ENCODE measurements at regions of chr4 and their contacts with region 1.

Region 1: DNA sequence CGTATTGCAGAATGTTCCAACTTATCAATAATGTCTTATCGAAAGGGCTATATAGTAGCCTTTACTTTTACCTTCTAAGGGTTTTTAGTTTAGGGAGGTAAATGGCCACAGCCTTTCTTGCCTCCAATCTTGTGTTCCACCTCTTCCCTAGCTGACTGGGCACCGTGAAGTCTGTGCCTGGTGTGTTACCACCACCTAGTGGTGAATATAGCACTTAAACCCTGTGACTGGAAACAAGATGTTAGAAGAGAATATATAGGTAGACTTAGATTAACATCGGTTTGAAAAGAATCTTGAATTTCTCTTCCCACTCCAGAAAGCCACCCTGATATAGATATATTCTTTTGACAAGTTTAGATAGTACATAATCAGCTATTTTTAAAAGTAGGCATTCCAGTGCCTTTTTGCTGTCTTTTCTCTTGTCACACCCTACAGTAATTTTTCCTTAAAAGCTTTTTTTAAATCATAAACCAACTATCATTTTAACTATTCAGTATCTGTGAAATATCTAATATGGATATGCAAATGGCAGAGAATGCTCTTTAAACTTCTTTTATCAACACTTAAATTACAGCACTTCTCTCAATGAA is 27.8 kb upstream of the ADH7 start:
- DNase-seq: peak; percentile 61
- H3K4me3 ChIP-seq: no peak overlapping the region
- H3K27ac ChIP-seq: no peak overlapping the region
- H3K4me1 ChIP-seq: no peaks in the 10 kb centered on the region
- H3K27me3 ChIP-seq: peaks cover 0 to 13% of the 10 kb centered on the region in 2 experiments
- CTCF ChIP-seq: peak; percentile 56 to 65
- POLR2A ChIP-seq: no peak

Region 2: DNA sequence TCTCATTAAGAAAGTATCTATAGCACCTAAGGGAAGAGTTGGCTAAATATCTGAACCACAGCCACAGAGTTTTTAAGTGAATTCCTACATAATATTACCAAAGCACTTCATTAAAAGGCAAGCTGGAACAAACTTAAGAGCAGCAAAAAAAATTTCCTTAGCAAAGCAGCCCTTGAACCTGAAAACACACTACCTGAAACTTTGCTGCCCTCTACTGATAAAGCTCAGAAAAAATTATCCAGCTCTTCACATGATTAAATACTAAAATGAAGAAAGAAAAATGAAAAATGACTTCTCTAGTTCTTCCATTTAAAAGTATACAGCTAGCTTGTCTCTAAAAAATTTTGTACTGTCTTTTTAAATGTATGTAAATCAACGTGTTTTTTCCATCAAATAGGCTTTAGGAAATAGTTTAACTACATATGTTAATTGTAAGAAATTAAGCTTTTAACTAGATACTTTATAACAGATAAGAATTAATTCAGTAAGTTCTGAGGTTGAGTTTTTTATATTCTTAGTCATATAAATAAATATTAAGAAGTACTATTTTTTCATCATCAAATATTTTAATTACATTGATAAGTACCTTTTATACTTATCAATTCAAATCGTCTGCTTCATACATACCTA is 1475.8 kb before region 1 on chr4:
- CTCF ChIA-PET with region 1: no interaction called
- POLR2A ChIA-PET with region 1: no interaction called
- dilution Hi-C with region 1: no loop called
- intact Hi-C with region 1: loop called (anchors 5 kb)
- DNase-seq: peak; percentile 71
- H3K4me3 ChIP-seq: no peak overlapping the region
- H3K27ac ChIP-seq: no peak overlapping the region
- H3K4me1 ChIP-seq: no peaks in the 10 kb centered on the region
- H3K27me3 ChIP-seq: no peaks in the 10 kb centered on the region
- CTCF ChIP-seq: peak; percentile 33 to 48
- POLR2A ChIP-seq: no peak

Region 3: DNA sequence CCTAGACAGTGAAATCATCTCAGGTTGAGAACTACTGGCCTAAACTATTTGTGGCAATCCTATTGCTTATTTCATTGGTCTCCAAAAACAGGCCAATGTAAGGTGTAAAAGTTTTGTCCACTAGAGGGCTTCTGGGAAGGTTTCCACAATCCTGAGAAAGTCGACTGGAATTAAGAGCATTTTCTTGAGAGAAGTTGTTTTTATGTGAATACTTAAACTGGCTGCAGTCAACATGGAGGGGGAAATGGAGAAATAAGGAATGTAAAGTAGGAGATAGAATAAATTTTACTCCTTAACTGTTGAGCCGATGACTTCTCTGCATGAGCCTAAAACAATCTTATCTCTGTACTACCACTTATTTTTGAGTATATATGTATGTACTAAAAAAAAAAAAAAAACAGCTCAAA is 523.1 kb before region 1 on chr4:
- CTCF ChIA-PET with region 1: no interaction called
- POLR2A ChIA-PET with region 1: no interaction called
- dilution Hi-C with region 1: no loop called
- intact Hi-C with region 1: loop called (anchors 1 kb)
- DNase-seq: peak; percentile 81
- H3K4me3 ChIP-seq: no peak overlapping the region
- H3K27ac ChIP-seq: no peak overlapping the region
- H3K4me1 ChIP-seq: peaks cover 3% of the 10 kb centered on the region
- H3K27me3 ChIP-seq: no peaks in the 10 kb centered on the region
- CTCF ChIP-seq: peak; percentile 58 to 64
- POLR2A ChIP-seq: no peak

Region 4: DNA sequence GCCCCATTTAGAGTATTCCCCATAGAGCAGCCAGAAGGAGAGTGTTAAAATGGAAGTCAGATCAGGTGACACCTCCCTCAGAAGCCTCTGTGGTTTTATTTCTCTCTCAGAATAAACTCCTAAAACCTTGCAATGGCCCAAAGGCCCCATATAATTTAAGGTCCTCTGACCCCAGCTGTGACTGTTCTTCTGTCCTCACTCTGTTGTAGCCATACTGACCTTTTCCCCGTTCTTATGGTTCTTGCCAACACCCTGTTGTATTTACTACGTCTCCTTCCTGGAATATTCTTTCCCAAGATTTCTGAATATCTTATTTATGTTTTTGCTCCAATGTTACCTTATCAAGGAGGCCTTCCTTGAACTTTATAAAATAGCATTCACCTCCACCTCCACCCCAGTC is 45.8 kb before region 1 on chr4:
- CTCF ChIA-PET with region 1: interaction called, 14 read pairs
- POLR2A ChIA-PET with region 1: no interaction called
- dilution Hi-C with region 1: no loop called
- intact Hi-C with region 1: no loop called
- DNase-seq: no peak
- H3K4me3 ChIP-seq: no peak overlapping the region
- H3K27ac ChIP-seq: no peak overlapping the region
- H3K4me1 ChIP-seq: no peaks in the 10 kb centered on the region
- H3K27me3 ChIP-seq: peaks cover 3 to 8% of the 10 kb centered on the region in 2 experiments
- CTCF ChIP-seq: no peak
- POLR2A ChIP-seq: no peak

Region 5: GRCh38 chr4:99949034-99949998 is 486.3 kb after region 1 on chr4:
- CTCF ChIA-PET with region 1: interaction called, 4 read pairs
- POLR2A ChIA-PET with region 1: no interaction called
- dilution Hi-C with region 1: no loop called
- intact Hi-C with region 1: loop called (anchors 1 kb)
- DNase-seq: peak; percentile 91
- H3K4me3 ChIP-seq: peak overlapping the region; percentile 66 to 87 (median 86)
- H3K27ac ChIP-seq: peak overlapping the region; percentile 75
- H3K4me1 ChIP-seq: peaks cover 38% of the 10 kb centered on the region
- H3K27me3 ChIP-seq: no peaks in the 10 kb centered on the region
- CTCF ChIP-seq: peak; percentile 83 to 91
- POLR2A ChIP-seq: no peak

Region 6: DNA sequence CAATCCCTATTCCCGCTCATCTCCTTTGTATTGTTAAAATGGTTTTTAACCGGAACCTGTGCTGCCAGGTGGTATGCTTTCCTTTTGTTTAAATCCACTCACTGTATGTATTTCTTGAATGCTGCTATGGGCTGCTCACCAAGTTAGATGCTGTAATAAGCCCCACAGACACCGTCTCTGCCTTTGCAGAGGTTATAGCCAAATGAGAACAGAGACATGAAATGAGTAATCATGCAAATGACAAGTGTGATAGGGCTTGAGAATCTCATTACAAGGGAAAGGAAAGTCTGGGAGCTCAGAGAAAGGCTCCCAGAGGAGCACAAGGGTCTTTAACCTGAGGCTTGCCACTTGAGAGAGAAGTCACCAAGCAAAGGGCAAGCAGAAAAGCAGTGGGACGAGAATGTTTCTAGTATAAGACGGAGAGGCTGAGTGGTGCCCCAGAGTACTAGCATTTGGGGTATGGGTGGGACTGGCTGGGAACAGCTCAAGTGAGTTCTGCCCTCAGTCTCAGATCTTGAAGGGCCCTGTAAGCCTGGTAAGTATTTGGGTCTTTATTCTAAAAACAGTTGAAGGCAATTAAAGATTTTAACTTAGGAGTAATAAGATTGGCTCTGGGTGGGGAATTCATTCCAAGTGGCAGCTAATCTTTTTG is 597.9 kb after region 1 on chr4:
- CTCF ChIA-PET with region 1: no interaction called
- POLR2A ChIA-PET with region 1: no interaction called
- dilution Hi-C with region 1: no loop called
- intact Hi-C with region 1: no loop called
- DNase-seq: no peak
- H3K4me3 ChIP-seq: no peak overlapping the region
- H3K27ac ChIP-seq: no peak overlapping the region
- H3K4me1 ChIP-seq: no peaks in the 10 kb centered on the region
- H3K27me3 ChIP-seq: no peaks in the 10 kb centered on the region
- CTCF ChIP-seq: no peak
- POLR2A ChIP-seq: no peak

Measured in endothelial cell of umbilical vein (primary cell).